Esophagus muscularis mucosa (tissue), 4 donors: ENCODE measurements at regions of chr5 and their contacts with region 1.

Region 1: DNA sequence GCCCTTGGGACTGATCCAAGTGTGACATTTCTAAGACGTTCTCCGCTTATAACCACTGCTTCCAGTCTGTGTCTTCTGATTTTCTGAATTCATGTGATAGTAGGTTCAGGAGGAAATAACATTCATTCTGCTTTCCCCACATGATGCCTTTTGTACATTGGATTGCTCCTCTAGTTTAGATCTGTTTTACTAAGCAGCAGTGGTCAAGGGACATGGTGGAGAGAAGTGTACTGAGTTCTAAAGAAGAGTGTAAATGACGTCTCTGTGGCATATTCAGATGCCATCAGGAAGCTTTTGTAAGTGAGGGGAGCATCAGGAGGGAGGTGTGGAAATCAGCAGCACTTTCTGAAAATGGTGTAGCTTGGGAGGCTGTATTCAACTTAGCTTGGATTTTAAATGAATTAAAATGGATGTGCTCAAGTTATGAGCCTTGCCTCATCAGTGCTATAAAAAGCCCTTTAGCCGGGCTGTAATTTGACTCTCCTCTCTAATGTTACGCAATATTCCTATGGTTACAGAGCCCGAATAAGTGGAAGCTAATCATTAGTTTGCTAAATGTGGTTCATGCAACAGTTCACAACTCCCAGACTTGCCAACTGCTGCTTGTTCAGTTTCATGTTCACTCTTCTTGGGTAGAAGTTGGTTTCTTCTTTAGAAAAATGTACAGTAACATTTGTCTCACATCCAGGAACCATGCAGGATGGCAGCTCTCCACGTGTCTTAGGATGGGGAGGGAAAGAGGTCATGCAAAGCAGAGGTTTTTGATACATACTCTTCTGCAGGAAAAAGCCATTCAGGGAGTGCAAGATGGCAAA is 281.3 kb downstream of the ARHGAP26 start:
- DNase-seq: no peak
- H3K4me3 ChIP-seq: peak overlapping the region in 1 of 4 donors; percentile 2
- H3K27ac ChIP-seq: peak overlapping the region; percentile 65 to 75 (median 73)
- H3K4me1 ChIP-seq: peaks cover 37 to 53% (median 48%) of the 10 kb centered on the region in 4 donors
- H3K27me3 ChIP-seq: no peaks in the 10 kb centered on the region
- CTCF ChIP-seq: no peak
- EP300 ChIP-seq: no peak
- POLR2A ChIP-seq: no peak

Region 2: GRCh38 chr5:143142596-143143435 is 91.4 kb after region 1 on chr5:
- intact Hi-C with region 1: loop called (anchors 10 kb)
- DNase-seq: no peak
- H3K4me3 ChIP-seq: peak overlapping the region in 1 of 4 donors; percentile 0
- H3K27ac ChIP-seq: peak overlapping the region; percentile 70 to 84 (median 76)
- H3K4me1 ChIP-seq: peaks cover 45 to 74% (median 64%) of the 10 kb centered on the region in 4 donors
- H3K27me3 ChIP-seq: no peaks in the 10 kb centered on the region
- CTCF ChIP-seq: no peak
- EP300 ChIP-seq: no peak
- POLR2A ChIP-seq: no peak

Region 3: GRCh38 chr5:143271431-143271830 is 220.0 kb after region 1 on chr5:
- intact Hi-C with region 1: no loop called
- DNase-seq: no peak
- H3K4me3 ChIP-seq: no peak overlapping the region
- H3K27ac ChIP-seq: no peak overlapping the region
- H3K4me1 ChIP-seq: no peaks in the 10 kb centered on the region
- H3K27me3 ChIP-seq: no peaks in the 10 kb centered on the region
- CTCF ChIP-seq: no peak
- EP300 ChIP-seq: no peak
- POLR2A ChIP-seq: no peak

Region 4: GRCh38 chr5:143314659-143315058 is 263.2 kb after region 1 on chr5:
- intact Hi-C with region 1: no loop called
- DNase-seq: no peak
- H3K4me3 ChIP-seq: no peak overlapping the region
- H3K27ac ChIP-seq: peak overlapping the region in 3 of 4 donors; percentile 3 to 66 (median 34)
- H3K4me1 ChIP-seq: peaks cover 53 to 89% (median 85%) of the 10 kb centered on the region in 4 donors
- H3K27me3 ChIP-seq: no peaks in the 10 kb centered on the region
- CTCF ChIP-seq: no peak
- EP300 ChIP-seq: no peak
- POLR2A ChIP-seq: no peak

Region 5: DNA sequence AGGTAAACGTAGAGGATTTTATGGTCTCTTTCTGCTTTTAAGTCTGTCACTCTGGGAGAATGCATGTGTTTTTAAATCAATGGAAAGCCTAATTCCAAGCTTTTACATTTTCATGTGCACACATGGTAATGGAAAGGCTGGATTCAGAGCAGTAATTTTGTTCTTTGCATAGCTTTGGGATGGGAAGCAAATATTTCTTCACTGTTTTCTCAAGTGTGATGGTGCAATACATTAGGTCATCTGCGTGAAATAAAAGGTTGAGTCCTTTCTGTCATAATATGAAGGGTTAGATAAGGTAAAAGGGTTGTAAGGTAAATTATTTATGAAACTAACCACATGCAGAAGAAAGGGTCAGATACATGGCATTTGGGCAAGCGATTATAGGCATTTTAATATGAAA is 440.2 kb after region 1 on chr5:
- intact Hi-C with region 1: no loop called
- DNase-seq: no peak
- H3K4me3 ChIP-seq: no peak overlapping the region
- H3K27ac ChIP-seq: no peak overlapping the region
- H3K4me1 ChIP-seq: peaks cover 14 to 27% (median 20%) of the 10 kb centered on the region in 4 donors
- H3K27me3 ChIP-seq: no peaks in the 10 kb centered on the region
- CTCF ChIP-seq: no peak
- EP300 ChIP-seq: no peak
- POLR2A ChIP-seq: no peak